MCF 10A (cell line): ENCODE measurements at regions of chr5 and their contacts with region 1.

Region 1: DNA sequence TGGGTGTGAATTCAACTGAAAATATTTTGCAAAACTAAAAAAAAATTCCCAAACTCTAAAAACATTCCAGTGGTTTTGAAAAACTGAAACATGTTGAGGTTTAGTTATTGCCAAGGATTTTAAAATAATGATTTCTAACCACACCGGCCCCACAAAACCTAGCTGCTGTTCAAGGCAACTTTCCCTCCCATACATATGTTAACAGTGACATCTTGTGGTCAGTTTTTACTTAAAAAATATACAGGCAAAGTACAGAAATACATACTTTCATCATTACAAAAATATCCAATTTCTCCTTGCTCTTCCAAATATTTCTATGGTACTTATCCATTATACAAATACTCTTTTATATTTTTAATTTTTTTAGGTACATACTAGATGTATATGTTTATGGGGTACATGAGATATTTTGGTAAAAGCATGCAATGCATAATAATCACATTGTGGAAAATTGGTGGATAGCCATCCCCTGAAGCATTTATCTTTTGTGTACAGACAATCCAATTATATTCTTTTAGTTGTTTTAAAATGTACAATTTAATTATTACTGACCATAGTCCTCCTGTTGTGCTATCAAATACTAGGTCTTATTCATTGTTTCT is 34.4 kb upstream of the MRPS30 start:
- DNase-seq: peak; percentile 53
- H3K4me3 Mint-ChIP-seq: no peak overlapping the region
- H3K27ac Mint-ChIP-seq: no peak overlapping the region
- H3K4me1 Mint-ChIP-seq: no peaks in the 10 kb centered on the region
- H3K27me3 Mint-ChIP-seq: no peaks in the 10 kb centered on the region
- CTCF ChIP-seq: peak; percentile 70

Region 2: DNA sequence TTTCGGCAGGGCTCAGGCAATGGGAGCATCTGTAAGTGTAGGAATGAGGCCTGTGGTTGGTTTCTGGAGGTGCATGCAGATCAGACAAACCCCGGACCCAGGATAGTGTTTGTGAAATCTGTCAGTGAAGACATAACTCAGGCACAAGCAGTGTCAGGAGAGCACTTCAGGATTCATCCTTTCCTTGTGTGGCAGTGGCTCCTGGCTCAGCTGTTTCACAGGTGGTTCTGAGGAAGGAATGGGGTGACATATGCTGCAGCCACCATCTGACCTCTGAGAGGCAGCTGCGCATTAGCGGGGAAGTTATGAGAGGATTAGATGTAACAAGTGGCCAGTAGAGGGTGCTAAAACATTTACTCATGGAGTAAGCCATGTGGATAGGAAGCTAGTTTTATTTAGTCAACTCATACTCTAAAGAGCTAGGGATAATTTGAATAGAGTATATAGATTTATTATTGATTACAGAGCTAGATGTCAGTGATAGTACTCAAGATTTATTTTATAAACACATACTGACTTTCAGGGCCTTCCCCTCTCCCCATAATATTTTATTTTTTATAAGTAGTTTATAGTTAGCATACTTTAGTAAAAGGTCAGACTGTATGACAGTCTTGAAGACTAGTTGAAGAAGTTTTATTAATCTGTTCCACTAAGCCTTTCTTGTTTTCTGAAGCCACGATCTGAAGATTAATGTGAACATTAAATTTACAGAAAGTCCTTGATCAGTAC is 1143.0 kb before region 1 on chr5:
- CTCF ChIA-PET with region 1: interaction called, 3 read pairs
- POLR2A ChIA-PET with region 1: no interaction called
- intact Hi-C with region 1: loop called (anchors 10 kb)
- DNase-seq: peak; percentile 78
- H3K4me3 Mint-ChIP-seq: no peak overlapping the region
- H3K27ac Mint-ChIP-seq: peak overlapping the region; percentile 46
- H3K4me1 Mint-ChIP-seq: no peaks in the 10 kb centered on the region
- H3K27me3 Mint-ChIP-seq: no peaks in the 10 kb centered on the region
- CTCF ChIP-seq: peak; percentile 63

Region 3: DNA sequence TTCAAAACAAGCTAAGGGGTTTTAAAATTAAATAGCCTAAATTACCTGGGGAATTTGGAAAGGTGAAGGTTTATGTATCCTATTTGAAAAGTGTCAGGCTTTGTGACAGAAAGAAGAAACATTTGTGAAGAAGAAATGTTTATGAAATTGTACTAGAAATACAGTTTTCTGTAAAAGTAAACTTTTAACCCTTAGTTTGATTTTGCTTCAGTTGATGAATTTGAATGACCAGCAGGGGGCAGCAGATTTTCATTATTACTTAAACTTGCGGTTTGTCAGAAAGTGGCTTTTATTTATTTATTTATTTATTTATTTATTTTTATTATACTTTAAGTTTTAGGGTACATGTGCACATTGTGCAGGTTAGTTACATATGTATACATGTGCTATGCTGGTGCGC is 1113.3 kb before region 1 on chr5:
- CTCF ChIA-PET with region 1: no interaction called
- POLR2A ChIA-PET with region 1: no interaction called
- intact Hi-C with region 1: loop called (anchors 1 kb)
- DNase-seq: peak; percentile 61
- H3K4me3 Mint-ChIP-seq: no peak overlapping the region
- H3K27ac Mint-ChIP-seq: no peak overlapping the region
- H3K4me1 Mint-ChIP-seq: no peaks in the 10 kb centered on the region
- H3K27me3 Mint-ChIP-seq: no peaks in the 10 kb centered on the region
- CTCF ChIP-seq: peak; percentile 48

Region 4: DNA sequence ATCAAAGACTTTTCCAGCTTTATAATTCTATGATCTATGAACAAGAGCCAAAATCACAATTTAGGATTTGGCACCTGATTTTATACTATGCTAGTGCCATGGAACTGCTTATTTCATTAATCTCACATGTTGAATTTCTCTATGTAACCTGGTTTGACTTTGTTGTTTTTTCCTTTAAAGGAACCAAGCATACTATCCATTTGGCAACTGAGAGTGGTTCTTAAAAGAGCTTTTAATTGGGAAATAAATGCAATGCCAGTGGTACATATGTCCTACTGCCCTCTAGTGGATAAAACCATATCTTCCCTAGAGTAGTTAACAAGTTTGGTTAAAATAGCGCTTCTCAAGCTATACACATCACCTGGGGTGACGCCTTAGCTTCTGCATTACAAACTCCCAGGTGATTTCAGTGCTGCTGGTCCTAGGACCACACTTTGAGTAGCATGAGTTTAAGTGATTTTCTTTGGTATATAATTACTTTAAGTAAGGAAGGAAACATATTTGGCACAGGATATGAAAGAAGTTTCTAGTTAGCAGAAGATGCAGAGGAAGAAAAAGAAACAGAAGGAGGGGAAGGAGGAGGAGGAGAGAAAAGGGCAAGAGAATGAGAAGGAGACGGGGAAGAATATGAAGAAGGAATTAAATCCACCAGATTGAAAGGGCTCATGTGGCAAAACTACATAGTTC is 442.0 kb before region 1 on chr5:
- CTCF ChIA-PET with region 1: interaction called, 3 read pairs
- POLR2A ChIA-PET with region 1: no interaction called
- intact Hi-C with region 1: loop called (anchors 5 kb)
- DNase-seq: peak; percentile 66
- H3K4me3 Mint-ChIP-seq: no peak overlapping the region
- H3K27ac Mint-ChIP-seq: peak overlapping the region; percentile 21
- H3K4me1 Mint-ChIP-seq: no peaks in the 10 kb centered on the region
- H3K27me3 Mint-ChIP-seq: no peaks in the 10 kb centered on the region
- CTCF ChIP-seq: peak; percentile 67

Region 5: DNA sequence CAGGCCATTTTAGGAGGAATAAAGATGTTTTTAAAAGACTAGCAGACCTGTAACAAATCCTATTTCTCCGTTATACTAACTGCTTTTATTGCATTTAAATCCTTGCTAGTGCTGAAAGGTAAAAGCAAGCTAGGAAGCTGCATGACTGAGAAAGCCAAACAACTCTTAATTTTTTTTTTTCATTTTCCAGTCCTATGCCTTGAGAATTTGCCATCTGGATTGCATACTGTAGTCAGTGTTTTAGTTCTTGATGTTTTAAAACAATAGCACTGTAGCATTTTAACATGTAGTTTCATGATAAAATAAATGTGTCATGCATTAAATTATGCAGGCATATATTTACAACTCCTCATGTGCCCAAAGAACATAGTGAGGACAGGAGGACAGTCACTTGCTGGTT is 276.8 kb before region 1 on chr5:
- CTCF ChIA-PET with region 1: interaction called, 3 read pairs
- POLR2A ChIA-PET with region 1: no interaction called
- intact Hi-C with region 1: loop called (anchors 1 kb)
- DNase-seq: no peak
- H3K4me3 Mint-ChIP-seq: no peak overlapping the region
- H3K27ac Mint-ChIP-seq: no peak overlapping the region
- H3K4me1 Mint-ChIP-seq: no peaks in the 10 kb centered on the region
- H3K27me3 Mint-ChIP-seq: no peaks in the 10 kb centered on the region
- CTCF ChIP-seq: no peak

Region 6: DNA sequence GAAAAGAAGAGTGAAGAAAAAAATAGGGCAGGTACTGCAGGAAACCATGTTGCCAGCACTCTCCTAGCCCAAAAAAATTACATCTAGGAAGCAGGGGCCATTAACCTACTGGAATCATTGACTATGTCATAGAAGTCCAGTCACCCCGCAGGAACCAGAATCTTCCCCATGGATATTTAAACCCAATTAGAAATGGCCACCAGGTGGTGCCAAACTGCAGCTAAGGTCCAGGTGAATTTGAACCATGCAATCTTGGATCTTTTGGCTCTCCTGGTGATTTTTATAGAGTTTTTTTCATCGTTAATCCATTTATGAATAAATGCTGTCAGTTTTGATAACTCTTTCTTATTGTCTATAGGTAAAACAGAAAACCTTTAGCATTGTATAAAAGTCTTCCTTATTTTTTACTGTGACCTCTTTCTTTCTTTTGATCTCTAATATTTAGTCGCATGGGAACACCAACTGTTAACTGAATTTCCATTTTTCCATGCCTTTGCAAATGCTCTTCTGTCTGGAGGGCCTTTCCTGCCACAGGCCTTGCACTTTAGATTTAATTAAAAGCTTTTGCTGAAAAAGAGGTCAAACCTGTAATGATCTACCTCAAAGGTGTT is 237.6 kb before region 1 on chr5:
- CTCF ChIA-PET with region 1: interaction called, 21 read pairs
- POLR2A ChIA-PET with region 1: interaction called, 3 read pairs
- intact Hi-C with region 1: loop called (anchors 1 kb)
- DNase-seq: peak; percentile 72
- H3K4me3 Mint-ChIP-seq: no peak overlapping the region
- H3K27ac Mint-ChIP-seq: no peak overlapping the region
- H3K4me1 Mint-ChIP-seq: peaks cover 17% of the 10 kb centered on the region
- H3K27me3 Mint-ChIP-seq: no peaks in the 10 kb centered on the region
- CTCF ChIP-seq: peak; percentile 76

Region 7: DNA sequence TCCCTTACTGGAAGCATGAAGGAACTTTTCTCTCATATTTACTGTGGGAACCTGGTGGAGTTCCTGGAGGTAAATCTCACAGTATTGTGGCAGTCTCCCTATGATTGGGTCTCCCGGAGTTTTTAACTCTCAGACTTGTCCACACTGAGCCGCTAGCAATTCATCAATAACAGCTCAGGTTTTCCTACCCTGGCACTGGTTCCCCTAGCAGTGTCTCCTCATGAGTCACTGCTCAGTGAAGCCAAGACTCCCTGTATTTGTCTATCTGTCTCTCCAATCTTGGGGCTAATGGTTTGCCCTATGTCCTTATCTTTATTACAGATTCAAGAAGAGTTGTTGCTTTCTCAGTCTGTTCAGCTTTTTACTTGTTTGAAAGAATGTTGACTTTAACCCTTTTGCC is 208.5 kb before region 1 on chr5:
- CTCF ChIA-PET with region 1: no interaction called
- POLR2A ChIA-PET with region 1: no interaction called
- intact Hi-C with region 1: no loop called
- DNase-seq: peak; percentile 50
- H3K4me3 Mint-ChIP-seq: no peak overlapping the region
- H3K27ac Mint-ChIP-seq: no peak overlapping the region
- H3K4me1 Mint-ChIP-seq: peaks cover 11% of the 10 kb centered on the region
- H3K27me3 Mint-ChIP-seq: no peaks in the 10 kb centered on the region
- CTCF ChIP-seq: no peak